RWPE1 (cell line): ENCODE measurements at regions of chr15 and their contacts with region 1.

Region 1: GRCh38 chr15:40307421-40308211 is at the start of gene PLCB2:
- DNase-seq: no peak
- H3K27ac ChIP-seq: no peak within 1 kb of the TSS
- CTCF ChIP-seq: no peak

Region 2: DNA sequence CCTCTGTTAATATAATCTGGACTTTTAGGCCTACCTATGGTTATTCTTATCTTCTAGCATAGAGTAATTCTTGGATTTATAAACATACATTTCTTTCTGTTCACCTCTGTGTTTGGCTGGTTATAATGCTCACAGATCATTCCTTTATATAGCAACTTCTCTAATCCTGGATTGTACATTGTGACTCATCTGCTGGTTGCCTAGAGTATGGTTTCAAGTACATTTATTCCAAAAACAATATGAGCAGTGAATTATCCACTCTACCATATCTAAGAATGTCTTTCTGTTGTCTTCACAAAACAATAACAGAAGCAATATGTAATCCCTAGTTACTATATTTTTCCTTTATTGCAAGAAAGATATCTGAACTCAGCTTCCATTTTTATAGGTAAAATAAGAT is 560.3 kb before region 1 on chr15:
- CTCF ChIA-PET with region 1: no interaction called
- POLR2A ChIA-PET with region 1: no interaction called
- DNase-seq: peak; percentile 8
- H3K27ac ChIP-seq: no peak overlapping the region
- CTCF ChIP-seq: no peak

Region 3: DNA sequence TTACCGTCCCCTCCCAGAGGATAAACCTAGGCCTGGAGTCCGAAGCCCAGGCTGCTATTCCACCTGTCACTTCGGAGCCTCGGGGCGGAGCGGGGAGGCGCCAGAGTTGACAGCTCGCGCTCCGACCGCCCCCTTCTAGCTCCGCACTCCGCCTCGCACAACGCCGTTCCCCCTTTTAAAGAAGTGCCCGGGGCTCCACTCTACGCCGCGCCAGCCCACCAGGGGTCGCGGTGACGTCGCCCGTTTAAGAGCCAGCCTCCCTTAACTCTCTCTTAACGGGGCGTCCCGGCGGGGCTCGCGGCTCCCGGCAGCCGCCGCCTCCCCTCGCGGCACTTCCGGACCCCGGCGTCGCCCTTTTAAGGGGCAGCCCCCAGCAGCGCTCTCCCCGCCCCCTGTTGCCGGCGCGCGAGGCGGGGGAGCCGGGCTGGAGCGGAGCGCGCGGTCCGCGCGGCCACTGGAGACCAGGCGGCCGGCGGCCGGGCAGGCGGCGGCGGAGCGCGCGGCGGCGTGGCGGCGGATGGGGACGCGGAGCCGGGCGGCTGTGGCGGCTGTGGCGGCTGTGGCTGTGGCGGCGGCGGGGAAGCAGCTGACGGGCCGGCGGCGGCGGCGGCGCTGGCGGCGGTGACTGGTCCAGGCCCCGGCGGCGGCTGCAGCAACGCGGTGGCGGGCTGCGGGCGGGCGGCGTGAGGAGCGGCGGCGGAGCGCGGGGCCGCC is 15.8 kb after region 1 on chr15 and contains the start of gene INAFM2:
- CTCF ChIA-PET with region 1: interaction called, 10 read pairs
- POLR2A ChIA-PET with region 1: interaction called, 3 read pairs
- DNase-seq: peak; percentile 90
- H3K27ac ChIP-seq: peak within 1 kb of the TSS; percentile 69
- CTCF ChIP-seq: no peak; the same call in 1 of the 2 replicates

Region 4: GRCh38 chr15:40397688-40398412 is 90.2 kb after region 1 on chr15:
- CTCF ChIA-PET with region 1: interaction called, 3 read pairs
- POLR2A ChIA-PET with region 1: interaction called, 10 read pairs
- DNase-seq: no peak
- H3K27ac ChIP-seq: no peak overlapping the region
- CTCF ChIP-seq: no peak